ENCODE measurements at regions of chr4 and their contacts with region 1.

Region 1: GRCh38 chr4:105630670-105631655 is 77.5 kb downstream of the INTS12 start:
- DNase-seq: no peak
- H3K4me3 ChIP-seq: no peak overlapping the region
- H3K27ac ChIP-seq: no peak overlapping the region
- H3K4me1 ChIP-seq: no peaks in the 10 kb centered on the region
- CTCF ChIP-seq: no peak

Region 2: DNA sequence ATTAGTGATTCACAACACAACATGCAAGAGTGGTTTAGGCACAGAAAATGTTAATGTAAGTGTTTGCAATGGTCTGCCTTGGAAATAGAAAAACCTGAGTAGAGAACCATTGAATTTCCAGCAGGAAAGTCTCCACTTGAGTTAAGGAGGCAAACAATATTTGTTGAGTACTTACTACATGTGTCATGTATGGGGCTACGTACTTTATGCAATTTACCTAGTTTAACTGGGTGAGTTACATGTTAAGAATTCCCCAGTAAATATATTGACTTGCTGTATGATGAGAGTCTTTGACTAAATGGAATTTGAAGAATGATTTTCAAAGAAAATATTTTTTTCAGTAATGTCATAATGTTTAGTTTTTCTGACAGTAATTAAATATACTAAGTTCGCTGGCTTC is 256.5 kb after region 1 on chr4:
- CTCF ChIA-PET with region 1: no interaction called
- POLR2A ChIA-PET with region 1: interaction called, 10 read pairs
- intact Hi-C with region 1: no loop called
- DNase-seq: no peak
- H3K4me3 ChIP-seq: no peak overlapping the region
- H3K27ac ChIP-seq: no peak overlapping the region
- H3K4me1 ChIP-seq: no peaks in the 10 kb centered on the region
- CTCF ChIP-seq: no peak

Measured in OCI-LY7 (cell line).